Activated CD8-positive, alpha-beta T cell treated with anti-CD3 and anti-CD28 coated beads for 36 hours (primary cell): ENCODE measurements at regions of chr6 and their contacts with region 1.

Region 1: DNA sequence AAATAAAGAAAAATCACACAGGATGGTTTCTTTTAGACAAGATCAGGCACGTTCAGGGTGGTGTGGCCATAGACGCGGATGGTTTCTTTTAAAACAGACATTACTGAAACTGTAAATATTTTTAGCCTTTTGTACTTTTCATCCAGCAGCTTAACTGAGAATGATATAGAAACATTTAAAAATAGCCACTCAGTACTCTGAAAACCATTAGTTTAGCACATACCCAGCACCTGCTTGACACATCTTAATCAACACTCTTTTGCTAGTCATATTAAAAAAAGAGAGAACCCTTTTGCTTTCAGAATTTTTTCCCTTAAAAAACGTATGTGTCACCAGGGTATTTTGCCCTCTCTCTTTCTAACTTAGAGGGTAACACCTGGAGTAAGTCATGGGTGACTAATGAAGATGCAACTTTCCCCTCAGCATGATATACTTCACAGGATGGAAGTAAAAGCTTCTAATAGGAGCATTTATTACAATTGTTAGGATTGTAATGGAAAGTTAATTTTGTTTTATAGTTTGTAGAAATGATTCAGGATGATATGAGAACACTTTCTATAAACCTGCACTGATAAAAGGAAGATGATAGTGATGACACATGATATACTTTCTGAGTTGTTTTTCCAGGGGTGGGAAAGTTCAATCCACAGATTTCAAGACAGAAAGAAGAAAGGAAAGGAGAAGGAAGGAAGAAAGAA is 45.2 kb downstream of the BACH2 start:
- DNase-seq: no peak
- ATAC-seq: peak; percentile 59
- H3K4me3 Mint-ChIP-seq: peak overlapping the region; percentile 58
- H3K27ac Mint-ChIP-seq: peak overlapping the region; percentile 90
- H3K4me1 Mint-ChIP-seq: peaks cover 86% of the 10 kb centered on the region
- H3K27me3 Mint-ChIP-seq: no peaks in the 10 kb centered on the region
- CTCF ChIP-seq: no peak

Region 2: GRCh38 chr6:89952686-89953085 is 298.8 kb before region 1 on chr6:
- CTCF ChIA-PET with region 1: no interaction called
- POLR2A ChIA-PET with region 1: no interaction called
- intact Hi-C with region 1: loop called (anchors 5 kb)
- DNase-seq: peak; percentile 85
- ATAC-seq: peak; percentile 84
- H3K4me3 Mint-ChIP-seq: peak overlapping the region; percentile 35
- H3K27ac Mint-ChIP-seq: peak overlapping the region; percentile 89
- H3K4me1 Mint-ChIP-seq: peaks cover 72% of the 10 kb centered on the region
- H3K27me3 Mint-ChIP-seq: no peaks in the 10 kb centered on the region
- CTCF ChIP-seq: no peak

Region 3: GRCh38 chr6:90230548-90231215 is 20.8 kb before region 1 on chr6:
- CTCF ChIA-PET with region 1: interaction called, 3 read pairs
- POLR2A ChIA-PET with region 1: interaction called, 6 read pairs
- intact Hi-C with region 1: loop called (anchors 2 kb)
- DNase-seq: peak; percentile 34
- ATAC-seq: no peak
- H3K4me3 Mint-ChIP-seq: peak overlapping the region; percentile 52
- H3K27ac Mint-ChIP-seq: peak overlapping the region; percentile 96
- H3K4me1 Mint-ChIP-seq: peaks cover 92% of the 10 kb centered on the region
- H3K27me3 Mint-ChIP-seq: no peaks in the 10 kb centered on the region
- CTCF ChIP-seq: no peak

Region 4: DNA sequence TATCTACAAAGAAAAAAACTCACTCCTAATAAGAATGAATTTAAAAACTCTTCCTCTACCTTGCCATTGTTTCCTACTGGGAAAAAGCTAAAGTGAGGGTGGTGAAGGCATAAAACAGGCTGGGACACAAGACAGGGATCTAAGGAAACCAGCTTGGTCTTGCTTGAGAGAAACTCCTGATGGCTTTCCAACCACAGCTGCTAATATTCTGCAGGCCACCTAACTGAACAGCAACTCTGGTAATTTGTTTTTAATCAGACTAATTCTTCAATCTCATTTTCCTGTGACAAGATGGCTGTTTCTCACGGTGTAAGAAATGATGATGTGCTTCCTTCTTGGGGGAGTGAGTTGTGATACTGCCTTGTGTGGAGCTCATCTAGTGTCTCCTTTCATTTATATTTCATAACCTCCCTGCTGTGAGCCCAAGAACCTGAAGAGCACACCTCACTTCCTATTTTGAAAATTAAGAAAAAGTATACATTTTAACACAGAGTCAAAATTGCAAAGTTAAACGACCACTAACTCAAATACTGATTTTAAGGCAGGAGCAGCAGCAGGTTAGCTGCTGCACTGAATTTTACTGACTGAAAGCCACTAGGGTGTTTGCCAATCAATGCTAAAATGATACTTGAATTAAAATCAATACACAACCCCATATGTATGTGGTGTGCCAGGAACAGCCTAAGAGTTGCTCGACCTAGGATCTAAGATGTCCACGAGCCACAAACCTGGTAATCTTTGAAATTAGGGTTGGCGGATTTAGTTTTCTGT is 12.8 kb before region 1 on chr6:
- CTCF ChIA-PET with region 1: interaction called, 3 read pairs
- POLR2A ChIA-PET with region 1: interaction called, 12 read pairs
- intact Hi-C with region 1: loop called (anchors 2 kb)
- DNase-seq: no peak
- ATAC-seq: no peak
- H3K4me3 Mint-ChIP-seq: peak overlapping the region; percentile 44
- H3K27ac Mint-ChIP-seq: peak overlapping the region; percentile 94
- H3K4me1 Mint-ChIP-seq: peaks cover 84% of the 10 kb centered on the region
- H3K27me3 Mint-ChIP-seq: no peaks in the 10 kb centered on the region
- CTCF ChIP-seq: no peak

Region 5: GRCh38 chr6:90263633-90264032 is 12.2 kb after region 1 on chr6:
- CTCF ChIA-PET with region 1: interaction called, 3 read pairs
- POLR2A ChIA-PET with region 1: interaction called, 29 read pairs
- intact Hi-C with region 1: loop called (anchors 2 kb)
- DNase-seq: no peak
- ATAC-seq: no peak
- H3K4me3 Mint-ChIP-seq: no peak overlapping the region
- H3K27ac Mint-ChIP-seq: peak overlapping the region; percentile 96
- H3K4me1 Mint-ChIP-seq: peaks cover 96% of the 10 kb centered on the region
- H3K27me3 Mint-ChIP-seq: no peaks in the 10 kb centered on the region
- CTCF ChIP-seq: no peak

Region 6: GRCh38 chr6:90274451-90275030 is 23.1 kb after region 1 on chr6:
- CTCF ChIA-PET with region 1: interaction called, 9 read pairs
- POLR2A ChIA-PET with region 1: interaction called, 29 read pairs
- intact Hi-C with region 1: loop called (anchors 2 kb)
- DNase-seq: peak; percentile 99
- ATAC-seq: peak; percentile 84
- H3K4me3 Mint-ChIP-seq: peak overlapping the region; percentile 47
- H3K27ac Mint-ChIP-seq: peak overlapping the region; percentile 96
- H3K4me1 Mint-ChIP-seq: peaks cover 87% of the 10 kb centered on the region
- H3K27me3 Mint-ChIP-seq: no peaks in the 10 kb centered on the region
- CTCF ChIP-seq: no peak

Region 7: DNA sequence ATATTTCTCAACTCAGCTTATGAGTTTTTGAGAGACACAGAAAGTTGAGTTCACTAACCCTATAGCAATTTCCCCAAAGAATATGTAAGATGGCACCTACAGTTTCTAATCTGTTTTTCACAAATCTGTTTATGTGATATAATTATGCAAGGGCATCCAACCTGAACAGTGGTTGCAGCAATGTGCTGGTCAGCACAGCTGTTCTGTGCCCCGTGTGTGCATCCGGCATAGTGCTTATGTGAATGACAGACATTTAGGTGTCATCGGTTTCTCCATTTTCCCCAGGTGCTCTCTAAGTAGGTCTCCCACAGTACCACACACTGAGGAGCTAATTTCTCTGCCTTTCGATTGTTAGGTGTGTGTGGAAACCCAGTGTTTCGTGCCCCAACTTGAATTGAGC is 52.9 kb after region 1 on chr6:
- CTCF ChIA-PET with region 1: no interaction called
- POLR2A ChIA-PET with region 1: no interaction called
- intact Hi-C with region 1: no loop called
- DNase-seq: no peak
- ATAC-seq: no peak
- H3K4me3 Mint-ChIP-seq: no peak overlapping the region
- H3K27ac Mint-ChIP-seq: no peak overlapping the region
- H3K4me1 Mint-ChIP-seq: peaks cover 34% of the 10 kb centered on the region
- H3K27me3 Mint-ChIP-seq: peaks cover 10% of the 10 kb centered on the region
- CTCF ChIP-seq: no peak